ENCODE measurements at regions of chr14 and their contacts with region 1.

Region 1: GRCh38 chr14:69291891-69292561 is 32.1 kb downstream of the GALNT16 start:
- DNase-seq: no peak
- H3K4me3 ChIP-seq: no peak overlapping the region
- H3K27ac ChIP-seq: no peak overlapping the region
- H3K4me1 ChIP-seq: no peaks in the 10 kb centered on the region
- H3K27me3 ChIP-seq: no peaks in the 10 kb centered on the region
- CTCF ChIP-seq: no peak

Region 2: DNA sequence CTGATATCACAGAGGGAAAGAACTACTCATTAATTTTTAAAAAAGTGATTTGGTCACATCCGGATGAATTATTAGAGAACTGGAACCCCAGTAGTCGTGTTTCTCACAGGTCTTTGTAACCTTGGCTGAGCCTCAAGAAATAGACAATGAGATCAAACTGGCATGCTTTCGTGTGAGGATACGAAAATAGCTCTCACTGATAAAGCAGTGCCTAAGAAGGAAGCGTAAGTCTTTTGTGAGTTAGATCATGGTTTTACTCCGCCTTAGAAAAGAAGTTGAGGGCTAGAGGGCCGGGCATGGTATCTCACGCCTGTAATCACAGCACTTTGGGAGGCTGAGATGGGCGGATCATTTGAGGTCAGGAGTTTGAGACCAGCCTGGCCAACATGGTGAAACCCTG is 65.8 kb before region 1 on chr14:
- CTCF ChIA-PET with region 1: no interaction called
- dilution Hi-C with region 1: loop called (anchors 5 kb)
- in situ Hi-C with region 1: no loop called
- intact Hi-C with region 1: no loop called
- DNase-seq: no peak
- H3K4me3 ChIP-seq: no peak overlapping the region
- H3K27ac ChIP-seq: no peak overlapping the region
- H3K4me1 ChIP-seq: no peaks in the 10 kb centered on the region
- H3K27me3 ChIP-seq: no peaks in the 10 kb centered on the region
- CTCF ChIP-seq: no peak

Region 3: GRCh38 chr14:69363055-69363454 is 71.0 kb after region 1 on chr14:
- CTCF ChIA-PET with region 1: no interaction called
- dilution Hi-C with region 1: loop called (anchors 5 kb)
- in situ Hi-C with region 1: no loop called
- intact Hi-C with region 1: no loop called
- DNase-seq: no peak
- H3K4me3 ChIP-seq: no peak overlapping the region
- H3K27ac ChIP-seq: no peak overlapping the region
- H3K4me1 ChIP-seq: no peaks in the 10 kb centered on the region
- H3K27me3 ChIP-seq: no peaks in the 10 kb centered on the region
- CTCF ChIP-seq: no peak

Measured in mammary epithelial cell (primary cell).